Heart right ventricle (tissue), 16 donors: ENCODE measurements at regions of chr4 and their contacts with region 1.

Region 1: DNA sequence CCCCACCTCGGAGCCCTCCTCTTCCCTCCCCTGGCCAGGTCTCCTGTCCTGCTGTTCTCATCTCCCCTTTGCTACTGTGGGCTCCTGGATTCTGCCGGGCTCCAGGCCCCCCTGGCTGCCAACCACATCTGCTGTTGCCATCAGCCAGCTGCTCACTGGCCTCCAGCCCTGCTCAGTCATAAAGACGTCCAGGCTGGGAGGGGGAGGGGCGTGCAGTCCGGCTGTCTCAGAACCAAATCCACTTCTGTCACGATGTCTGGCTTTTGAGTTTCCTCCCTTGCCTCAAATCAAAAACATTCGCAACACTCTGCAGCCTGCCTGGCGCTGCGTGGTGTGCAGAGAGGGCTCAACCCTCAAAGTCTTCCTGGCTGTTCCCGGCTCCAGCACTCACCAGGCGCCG is 7.1 kb downstream of the RASL11B start:
- DNase-seq: peak; percentile 73 to 76
- ATAC-seq: peak; percentile 44 to 78 (median 65)
- H3K4me3 ChIP-seq: no peak overlapping the region
- H3K27ac ChIP-seq: peak overlapping the region in 8 of 10 donors; percentile 13 to 86 (median 66)
- H3K4me1 ChIP-seq: peaks cover 10 to 77% (median 51%) of the 10 kb centered on the region in 9 donors
- H3K27me3 ChIP-seq: no peaks in the 10 kb centered on the region
- CTCF ChIP-seq: no peak

Region 2: GRCh38 chr4:52721968-52722815 is 147.0 kb before region 1 on chr4:
- intact Hi-C with region 1: loop called in 8 of 10 experiments (anchors 2 to 10 kb)
- DNase-seq: peak; percentile 91 to 97
- ATAC-seq: peak; percentile 98 to 100 (median 99)
- H3K4me3 ChIP-seq: peak overlapping the region; percentile 67 to 96 (median 88)
- H3K27ac ChIP-seq: peak overlapping the region; percentile 63 to 93 (median 84)
- H3K4me1 ChIP-seq: peaks cover 0 to 15% (median 10%) of the 10 kb centered on the region in 9 donors
- H3K27me3 ChIP-seq: no peaks in the 10 kb centered on the region
- CTCF ChIP-seq: peak in 1 of 9 donors; percentile 34

Region 3: GRCh38 chr4:52755426-52755825 is 113.8 kb before region 1 on chr4:
- intact Hi-C with region 1: no loop called
- DNase-seq: no peak
- ATAC-seq: peak in 2 of 8 donors; percentile 29 to 66
- H3K4me3 ChIP-seq: no peak overlapping the region
- H3K27ac ChIP-seq: peak overlapping the region in 2 of 10 donors; percentile 11 to 13
- H3K4me1 ChIP-seq: peaks cover 0 to 30% (median 13%) of the 10 kb centered on the region in 9 donors
- H3K27me3 ChIP-seq: peaks cover 0 to 27% (median 7%) of the 10 kb centered on the region in 7 donors
- CTCF ChIP-seq: no peak

Region 4: GRCh38 chr4:52939739-52940138 is 70.5 kb after region 1 on chr4:
- intact Hi-C with region 1: loop called in 1 of 10 experiments (anchors 5 kb)
- DNase-seq: no peak
- ATAC-seq: no peak
- H3K4me3 ChIP-seq: no peak overlapping the region
- H3K27ac ChIP-seq: peak overlapping the region in 1 of 10 donors; percentile 14
- H3K4me1 ChIP-seq: peaks cover 0 to 38% (median 7%) of the 10 kb centered on the region in 9 donors
- H3K27me3 ChIP-seq: no peaks in the 10 kb centered on the region
- CTCF ChIP-seq: no peak

Region 5: GRCh38 chr4:52957220-52957686 is 88.1 kb after region 1 on chr4:
- intact Hi-C with region 1: loop called in 4 of 10 experiments (anchors 10 kb)
- DNase-seq: peak in 1 of 2 donors; percentile 21
- ATAC-seq: peak; percentile 14 to 87 (median 70)
- H3K4me3 ChIP-seq: no peak overlapping the region
- H3K27ac ChIP-seq: peak overlapping the region in 9 of 10 donors; percentile 4 to 71 (median 57)
- H3K4me1 ChIP-seq: peaks cover 0 to 45% (median 20%) of the 10 kb centered on the region in 9 donors
- H3K27me3 ChIP-seq: no peaks in the 10 kb centered on the region
- CTCF ChIP-seq: no peak